ENCODE measurements at regions of chr1 and their contacts with region 1.

Region 1: DNA sequence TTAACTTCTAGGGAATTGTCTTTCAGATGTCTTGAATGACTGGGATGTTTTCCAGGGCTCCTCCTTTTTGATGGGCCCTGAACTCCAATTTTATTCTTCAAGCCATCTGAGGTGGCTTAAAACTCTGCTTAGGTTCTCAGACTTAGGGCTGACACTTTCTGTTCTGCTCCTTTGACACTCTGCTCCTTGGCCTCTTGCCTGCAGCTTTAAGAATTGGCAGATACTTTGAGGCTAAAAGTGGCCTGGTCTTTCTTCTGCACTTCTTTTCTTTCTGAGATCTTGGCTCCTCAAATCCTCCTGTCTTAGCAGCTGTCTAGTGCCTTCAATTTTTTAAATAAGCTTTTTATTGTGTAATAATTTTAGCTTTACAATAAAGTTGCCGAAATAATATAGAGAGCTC is 294.6 kb downstream of the RPS6KC1 start:
- DNase-seq: no peak
- H3K4me3 ChIP-seq: no peak overlapping the region
- H3K27ac ChIP-seq: no peak overlapping the region
- H3K4me1 ChIP-seq: no peaks in the 10 kb centered on the region
- H3K27me3 ChIP-seq: no peaks in the 10 kb centered on the region
- CTCF ChIP-seq: no peak
- POLR2A ChIP-seq: no peak

Region 2: DNA sequence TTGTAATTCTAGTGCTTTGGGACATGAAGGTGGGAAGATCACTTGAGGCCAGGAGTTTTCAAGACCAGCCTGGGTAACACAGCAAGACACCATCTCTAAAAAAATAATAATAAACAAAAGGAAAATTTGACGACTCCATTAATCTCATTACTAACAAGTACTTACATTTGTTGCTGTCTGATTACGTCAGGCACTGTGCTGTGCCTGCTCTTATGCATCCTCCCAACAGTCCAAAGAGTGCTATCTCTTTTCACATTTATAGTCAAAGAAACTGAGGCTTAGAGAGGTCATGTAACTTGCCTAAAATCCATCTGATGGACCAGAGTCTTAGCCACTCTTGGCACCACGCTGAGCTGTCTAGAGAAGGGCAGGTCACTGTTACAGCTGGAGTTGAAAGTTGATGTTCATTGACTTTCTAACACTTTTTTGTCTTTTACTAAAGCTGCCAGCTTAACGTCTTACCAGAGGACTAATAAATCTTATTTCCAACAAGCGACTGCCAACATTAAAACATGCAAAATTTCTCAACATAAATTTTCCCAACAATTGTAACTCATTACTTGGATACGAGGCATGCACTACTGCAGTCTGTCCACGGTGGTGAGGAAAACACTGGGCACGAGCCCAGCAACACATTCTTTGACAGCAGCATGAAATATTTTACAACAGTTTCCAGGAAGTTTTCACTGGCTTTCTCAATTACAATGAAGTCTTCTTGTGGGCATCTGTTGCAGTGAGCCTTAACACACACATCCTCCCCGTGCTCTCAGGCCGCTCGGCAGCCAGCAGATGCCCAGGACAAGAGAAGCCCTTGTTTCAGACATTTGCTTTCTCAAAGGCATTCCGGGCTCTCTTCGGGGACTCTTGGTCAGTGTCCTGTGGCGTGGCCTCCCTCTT is 379.3 kb after region 1 on chr1:
- intact Hi-C with region 1: loop called (anchors 5 kb)
- DNase-seq: peak in 1 of 2 donors; percentile 71
- H3K4me3 ChIP-seq: peak overlapping the region in 1 of 3 donors; percentile 7
- H3K27ac ChIP-seq: peak overlapping the region; percentile 52 to 80
- H3K4me1 ChIP-seq: no peaks in the 10 kb centered on the region
- H3K27me3 ChIP-seq: no peaks in the 10 kb centered on the region
- CTCF ChIP-seq: peak in 1 of 3 donors; percentile 19
- POLR2A ChIP-seq: no peak